GM18951 (cell line): ENCODE measurements at regions of chr17 and their contacts with region 1.

Region 1: DNA sequence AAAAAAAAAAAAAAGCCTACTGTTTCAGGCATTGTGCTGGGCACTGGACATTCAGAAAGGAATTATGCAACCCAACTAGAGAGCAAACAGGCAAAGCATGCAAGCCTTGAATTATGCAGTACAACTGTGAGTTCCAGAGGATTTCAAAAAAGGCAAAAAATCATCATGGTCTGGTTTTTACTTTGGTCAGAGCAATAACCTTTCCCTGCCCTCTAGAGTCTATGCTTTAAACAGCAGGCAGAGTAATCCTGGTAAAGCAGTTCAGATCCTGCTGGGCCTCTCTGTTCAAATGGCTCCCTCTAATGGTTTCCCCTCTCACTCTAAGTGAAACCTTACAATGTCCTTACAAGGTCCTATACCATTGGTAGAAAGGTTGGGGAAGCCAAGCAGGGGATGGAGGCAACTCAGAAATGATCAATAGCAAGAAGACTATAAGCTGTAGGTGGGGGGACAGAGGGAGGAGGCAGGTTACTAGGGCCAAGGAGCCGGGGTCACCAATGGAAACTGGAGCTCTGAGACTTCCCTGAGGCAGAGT is 4.6 kb upstream of the TAF15 start:
- POLR2A ChIP-seq: no peak

Region 2: DNA sequence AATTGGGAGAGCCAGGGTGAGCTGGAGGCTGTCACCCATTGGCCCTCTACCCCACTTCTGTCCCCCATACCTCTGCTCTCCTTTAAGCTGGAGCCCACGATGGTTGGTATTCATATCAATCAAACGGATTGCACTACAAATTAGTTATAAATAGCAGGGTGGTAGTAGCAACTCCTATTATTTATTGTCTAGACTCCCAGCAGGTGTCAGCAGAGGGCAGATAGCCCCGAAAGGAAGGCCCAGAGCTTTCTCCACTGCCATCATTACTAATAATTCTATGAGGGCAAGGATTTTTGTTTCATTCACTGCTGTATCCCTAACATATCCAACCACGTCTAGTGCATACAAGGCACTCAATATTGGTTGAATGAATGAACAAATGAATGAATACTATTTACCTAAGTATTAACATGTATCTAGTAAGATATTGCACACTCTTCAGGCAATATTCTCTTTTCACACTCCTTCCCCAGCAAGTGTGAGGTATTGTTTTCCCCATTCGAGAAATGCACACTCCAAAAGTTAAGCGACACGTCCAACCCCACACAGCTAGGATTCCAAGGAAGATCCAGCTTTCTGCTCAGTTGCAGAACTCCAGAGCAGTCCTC is 37.7 kb before region 1 on chr17:
- in situ Hi-C with region 1: loop called (anchors 5 kb)
- POLR2A ChIP-seq: no peak

Region 3: DNA sequence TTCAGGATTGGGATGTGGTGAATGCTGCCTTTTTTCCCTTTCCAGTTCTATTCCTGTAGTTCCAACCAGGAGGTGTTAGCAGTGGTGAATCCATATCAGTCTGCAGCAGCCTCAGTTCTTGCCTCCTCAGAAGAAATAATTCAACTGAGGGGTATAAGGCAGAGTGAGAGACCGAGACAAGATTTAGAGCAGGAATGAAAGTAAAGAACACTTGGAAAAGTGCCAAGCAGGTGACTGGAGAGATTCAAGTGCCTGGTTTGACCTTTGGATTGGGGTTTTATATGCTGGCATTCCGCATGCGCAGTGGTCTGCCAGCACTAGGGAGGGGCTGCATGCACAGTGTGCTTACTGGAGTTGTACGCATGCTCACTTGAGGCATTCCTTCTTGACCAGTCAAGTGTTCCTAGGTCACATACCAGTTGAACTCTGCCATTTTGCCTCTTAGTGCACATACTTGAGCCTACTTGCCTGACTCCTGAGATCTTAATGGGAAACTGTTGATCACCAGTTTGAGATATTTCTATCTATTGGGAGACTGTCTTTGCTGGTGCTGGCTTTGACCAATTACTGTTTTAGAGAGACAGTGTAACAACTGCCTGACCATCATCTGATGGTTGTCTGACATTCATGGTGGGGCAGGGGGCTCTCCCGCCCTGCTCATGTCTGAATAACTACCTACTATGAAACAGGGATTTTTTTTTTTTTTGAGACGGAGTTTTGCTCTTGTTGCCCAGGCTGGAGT is 197.3 kb after region 1 on chr17:
- in situ Hi-C with region 1: no loop called
- POLR2A ChIP-seq: no peak